IMR-90 (cell line): ENCODE measurements at regions of chr10 and their contacts with region 1.

Region 1: GRCh38 chr10:58435297-58435985 is 50.2 kb downstream of the TFAM start:
- DNase-seq: peak; percentile 99
- ATAC-seq: peak; percentile 90
- H3K4me3 ChIP-seq: no peak overlapping the region
- H3K27ac ChIP-seq: peak overlapping the region; percentile 89
- H3K4me1 ChIP-seq: peaks cover 19% of the 10 kb centered on the region
- H3K27me3 ChIP-seq: no peaks in the 10 kb centered on the region
- CTCF ChIP-seq: 0 out of 2 replicates have a peak, but pooled peaks have one; percentile 9
- POLR2A ChIP-seq: no peak
- RAD21 ChIP-seq: peak; percentile 24

Region 2: DNA sequence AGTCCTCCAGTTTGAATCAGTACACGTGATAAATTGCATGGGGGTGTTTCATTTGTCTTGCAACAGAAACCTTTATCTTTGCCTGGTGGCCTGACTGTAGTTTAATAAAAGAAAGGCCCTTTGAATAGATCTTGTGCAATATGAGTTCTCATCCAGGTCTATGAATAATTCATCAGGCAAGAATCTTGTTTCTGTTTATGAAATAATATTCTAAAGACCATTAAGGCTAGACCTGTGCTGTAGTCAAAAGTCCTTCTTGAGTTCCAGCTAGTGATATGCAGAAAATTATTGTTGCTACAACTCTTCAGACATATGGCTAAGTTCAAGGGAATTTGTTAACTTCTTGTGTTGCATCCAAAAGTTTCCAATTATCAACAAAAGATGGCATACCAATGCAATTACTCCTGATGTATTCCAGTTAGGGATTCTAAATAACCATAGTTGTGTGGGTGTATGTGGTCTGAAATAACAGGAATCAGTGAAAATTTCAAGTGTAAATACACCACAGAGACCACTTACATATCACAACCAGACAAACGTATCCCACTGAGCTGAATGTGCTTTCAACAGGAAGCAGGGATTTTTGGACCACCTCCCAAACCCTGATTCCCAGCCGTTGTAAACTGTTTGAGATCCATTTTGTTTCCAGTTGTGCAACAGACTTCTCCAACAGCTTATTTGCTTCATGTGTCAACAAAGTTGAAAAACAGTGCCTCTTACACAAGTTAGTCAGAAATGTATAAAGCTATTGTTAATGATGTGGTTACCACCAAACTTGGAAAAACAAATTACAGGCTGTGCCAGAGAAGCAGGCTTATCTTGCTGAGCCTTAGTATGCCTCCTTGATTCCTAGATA is 22.5 kb after region 1 on chr10:
- CTCF ChIA-PET with region 1: no interaction called
- POLR2A ChIA-PET with region 1: no interaction called
- dilution Hi-C with region 1: no loop called
- in situ Hi-C with region 1: no loop called
- intact Hi-C with region 1: loop called (anchors 1 kb)
- DNase-seq: peak; percentile 98
- ATAC-seq: peak; percentile 94
- H3K4me3 ChIP-seq: no peak overlapping the region
- H3K27ac ChIP-seq: peak overlapping the region; percentile 95
- H3K4me1 ChIP-seq: peaks cover 7% of the 10 kb centered on the region
- H3K27me3 ChIP-seq: no peaks in the 10 kb centered on the region
- CTCF ChIP-seq: no peak
- POLR2A ChIP-seq: no peak
- RAD21 ChIP-seq: no peak

Region 3: GRCh38 chr10:58513188-58514110 is 78.0 kb after region 1 on chr10:
- CTCF ChIA-PET with region 1: no interaction called
- POLR2A ChIA-PET with region 1: interaction called, 3 read pairs
- dilution Hi-C with region 1: no loop called
- in situ Hi-C with region 1: no loop called
- intact Hi-C with region 1: loop called (anchors 2 kb)
- DNase-seq: peak; percentile 84
- ATAC-seq: peak; percentile 35
- H3K4me3 ChIP-seq: peak overlapping the region; percentile 72
- H3K27ac ChIP-seq: peak overlapping the region; percentile 77
- H3K4me1 ChIP-seq: peaks cover 8% of the 10 kb centered on the region
- H3K27me3 ChIP-seq: no peaks in the 10 kb centered on the region
- CTCF ChIP-seq: no peak
- POLR2A ChIP-seq: peak; percentile 23; the same call in 1 of the 2 replicates
- RAD21 ChIP-seq: peak; percentile 8; the same call in 1 of the 2 replicates

Region 4: DNA sequence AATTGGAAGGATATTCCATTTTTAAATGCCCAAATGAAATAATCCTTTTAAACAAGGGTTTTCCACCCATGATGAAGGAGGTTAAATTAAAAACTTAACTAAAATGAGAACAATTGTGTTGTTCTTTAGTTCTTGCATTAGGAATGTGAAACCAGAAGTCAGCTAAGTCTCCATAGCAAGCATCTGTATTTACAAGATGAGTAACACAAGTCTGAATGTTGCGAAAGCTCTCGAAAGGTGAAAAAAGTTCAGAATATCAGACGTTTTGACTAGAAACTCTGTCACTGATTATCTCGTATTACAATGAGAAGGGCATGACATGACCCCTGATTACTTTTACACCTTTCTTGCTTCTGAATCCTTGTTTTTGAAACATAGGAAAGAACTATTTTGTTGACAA is 226.9 kb after region 1 on chr10:
- CTCF ChIA-PET with region 1: no interaction called
- POLR2A ChIA-PET with region 1: no interaction called
- dilution Hi-C with region 1: no loop called
- in situ Hi-C with region 1: no loop called
- intact Hi-C with region 1: no loop called
- DNase-seq: peak; percentile 94
- ATAC-seq: peak; percentile 64
- H3K4me3 ChIP-seq: no peak overlapping the region
- H3K27ac ChIP-seq: no peak overlapping the region
- H3K4me1 ChIP-seq: peaks cover 10% of the 10 kb centered on the region
- H3K27me3 ChIP-seq: no peaks in the 10 kb centered on the region
- CTCF ChIP-seq: no peak
- POLR2A ChIP-seq: no peak
- RAD21 ChIP-seq: no peak